HCT116 (cell line): ENCODE measurements at regions of chr11 and their contacts with region 1.

Region 1: GRCh38 chr11:842370-843002 is at the starts of genes POLR2L and TSPAN4:
- DNase-seq: peak; percentile 74
- ATAC-seq: peak; percentile 33
- H3K4me3 ChIP-seq: peak within 1 kb of the TSS; percentile 66 to 98
- H3K27ac ChIP-seq: peak within 1 kb of the TSS; percentile 97
- H3K4me1 ChIP-seq: peaks cover 42 to 71% of the 10 kb centered on the region in 2 experiments
- H3K27me3 ChIP-seq: no peaks in the 10 kb centered on the region
- CTCF ChIP-seq: no peak
- POLR2A ChIP-seq: peak; percentile 96
- RAD21 ChIP-seq: no peak
- total RNA-seq, gene POLR2L: 211 TPM
- total RNA-seq, gene TSPAN4: 50.3 TPM

Region 2: GRCh38 chr11:809287-810039 is 33.0 kb before region 1 on chr11 and contains the start of gene RPLP2:
- CTCF ChIA-PET with region 1: interaction called, 7 read pairs
- POLR2A ChIA-PET with region 1: interaction called, 3 read pairs
- RAD21 ChIA-PET with region 1: no interaction called
- intact Hi-C with region 1: loop called (anchors 5 kb)
- DNase-seq: peak; percentile 93
- ATAC-seq: peak; percentile 69
- H3K4me3 ChIP-seq: peak within 1 kb of the TSS; percentile 82 to 97
- H3K27ac ChIP-seq: peak within 1 kb of the TSS; percentile 93
- H3K4me1 ChIP-seq: peaks cover 19 to 55% of the 10 kb centered on the region in 2 experiments
- H3K27me3 ChIP-seq: no peaks in the 10 kb centered on the region
- CTCF ChIP-seq: no peak
- POLR2A ChIP-seq: peak; percentile 48
- RAD21 ChIP-seq: no peak
- total RNA-seq, gene RPLP2: 3,615 TPM

Region 3: DNA sequence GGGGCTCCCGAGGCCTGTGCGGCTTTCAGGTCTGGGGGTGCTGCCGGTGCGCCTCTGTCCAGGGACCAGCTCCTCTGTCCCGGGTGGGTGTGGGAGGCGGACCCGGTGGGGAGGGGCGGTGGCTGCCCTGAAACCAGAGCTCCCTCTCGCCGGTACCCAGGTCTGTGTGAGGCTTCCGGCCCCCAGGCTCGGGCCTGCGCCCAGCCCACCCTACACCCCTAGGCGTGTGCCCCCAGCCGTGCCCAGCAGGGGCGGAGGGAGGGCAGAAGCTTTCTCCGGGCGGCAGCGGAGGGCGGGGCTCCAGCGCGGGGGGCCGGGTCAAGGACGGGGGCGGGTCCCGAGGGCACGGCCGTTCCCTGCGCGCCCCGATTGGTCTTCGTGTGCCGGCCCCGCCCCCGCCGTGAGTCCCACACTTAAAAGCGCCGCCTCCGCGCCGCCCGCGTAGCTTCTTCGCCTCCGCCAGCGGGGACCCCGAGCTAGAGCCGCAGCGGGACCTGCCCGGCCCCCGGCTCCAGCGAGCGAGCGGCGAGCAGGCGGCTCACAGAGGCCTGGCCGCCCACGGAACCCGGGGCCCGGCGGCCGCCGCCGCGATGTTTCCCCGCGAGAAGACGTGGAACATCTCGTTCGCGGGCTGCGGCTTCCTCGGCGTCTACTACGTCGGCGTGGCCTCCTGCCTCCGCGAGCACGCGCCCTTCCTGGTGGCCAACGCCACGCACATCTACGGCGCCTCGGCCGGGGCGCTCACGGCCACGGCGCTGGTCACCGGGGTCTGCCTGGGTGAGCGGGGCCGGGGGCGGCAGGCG is 23.2 kb before region 1 on chr11:
- CTCF ChIA-PET with region 1: interaction called, 3 read pairs
- POLR2A ChIA-PET with region 1: interaction called, 14 read pairs
- RAD21 ChIA-PET with region 1: no interaction called
- intact Hi-C with region 1: no loop called
- DNase-seq: no peak
- ATAC-seq: peak; percentile 75
- H3K4me3 ChIP-seq: peak overlapping the region; percentile 65 to 77
- H3K27ac ChIP-seq: peak overlapping the region; percentile 81; the same call in 1 of the 2 replicates
- H3K4me1 ChIP-seq: peaks cover 26 to 40% of the 10 kb centered on the region in 2 experiments
- H3K27me3 ChIP-seq: no peaks in the 10 kb centered on the region
- CTCF ChIP-seq: no peak
- POLR2A ChIP-seq: peak; percentile 86
- RAD21 ChIP-seq: no peak

Region 4: GRCh38 chr11:830295-831117 is 12.0 kb before region 1 on chr11:
- CTCF ChIA-PET with region 1: interaction called, 5 read pairs
- POLR2A ChIA-PET with region 1: interaction called, 11 read pairs
- RAD21 ChIA-PET with region 1: no interaction called
- intact Hi-C with region 1: no loop called
- DNase-seq: no peak
- ATAC-seq: no peak
- H3K4me3 ChIP-seq: no peak overlapping the region
- H3K27ac ChIP-seq: no peak overlapping the region; the same call in 1 of the 2 replicates
- H3K4me1 ChIP-seq: peaks cover 35 to 62% of the 10 kb centered on the region in 2 experiments
- H3K27me3 ChIP-seq: no peaks in the 10 kb centered on the region
- CTCF ChIP-seq: no peak
- POLR2A ChIP-seq: no peak
- RAD21 ChIP-seq: no peak